Endothelial cell of umbilical vein (primary cell): ENCODE measurements at regions of chr16 and their contacts with region 1.

Region 1: GRCh38 chr16:2673066-2673999 is 9.0 kb upstream of the KCTD5 start:
- DNase-seq: peak; percentile 95
- H3K4me3 ChIP-seq: peak overlapping the region; percentile 61 to 92 (median 89)
- H3K27ac ChIP-seq: peak overlapping the region; percentile 14
- H3K4me1 ChIP-seq: peaks cover 7% of the 10 kb centered on the region
- H3K27me3 ChIP-seq: no peaks in the 10 kb centered on the region
- CTCF ChIP-seq: no peak
- POLR2A ChIP-seq: no peak

Region 2: GRCh38 chr16:2213817-2214720 is 459.3 kb before region 1 on chr16:
- CTCF ChIA-PET with region 1: no interaction called
- POLR2A ChIA-PET with region 1: no interaction called
- dilution Hi-C with region 1: no loop called
- intact Hi-C with region 1: no loop called
- DNase-seq: peak; percentile 34
- H3K4me3 ChIP-seq: peak overlapping the region; percentile 74 to 75 (median 74)
- H3K27ac ChIP-seq: peak overlapping the region; percentile 50
- H3K4me1 ChIP-seq: peaks cover 15% of the 10 kb centered on the region
- H3K27me3 ChIP-seq: no peaks in the 10 kb centered on the region
- CTCF ChIP-seq: no peak
- POLR2A ChIP-seq: peak; percentile 11

Region 3: GRCh38 chr16:2603165-2604015 is 69.9 kb before region 1 on chr16:
- CTCF ChIA-PET with region 1: no interaction called
- POLR2A ChIA-PET with region 1: no interaction called
- dilution Hi-C with region 1: no loop called
- intact Hi-C with region 1: loop called (anchors 10 kb)
- DNase-seq: peak; percentile 96
- H3K4me3 ChIP-seq: peak overlapping the region; percentile 44 to 56 (median 50)
- H3K27ac ChIP-seq: peak overlapping the region; percentile 60
- H3K4me1 ChIP-seq: peaks cover 3% of the 10 kb centered on the region
- H3K27me3 ChIP-seq: no peaks in the 10 kb centered on the region
- CTCF ChIP-seq: no peak
- POLR2A ChIP-seq: peak; percentile 97

Region 4: GRCh38 chr16:2911580-2912329 is 238.4 kb after region 1 on chr16 and contains the start of gene FLYWCH1:
- CTCF ChIA-PET with region 1: no interaction called
- POLR2A ChIA-PET with region 1: no interaction called
- dilution Hi-C with region 1: no loop called
- intact Hi-C with region 1: loop called (anchors 5 kb)
- DNase-seq: peak; percentile 98
- H3K4me3 ChIP-seq: peak within 1 kb of the TSS; percentile 84 to 96 (median 89)
- H3K27ac ChIP-seq: peak within 1 kb of the TSS; percentile 70
- H3K4me1 ChIP-seq: peaks cover 23% of the 10 kb centered on the region
- H3K27me3 ChIP-seq: no peaks in the 10 kb centered on the region
- CTCF ChIP-seq: no peak
- POLR2A ChIP-seq: no peak
- total RNA-seq, gene FLYWCH1: 51.2 and 51.7 TPM in 2 replicates